Activated B cell treated with CpG ODN at 0.5 μM for 24 hours (primary cell): ENCODE measurements at regions of chr2 and their contacts with region 1.

Region 1: DNA sequence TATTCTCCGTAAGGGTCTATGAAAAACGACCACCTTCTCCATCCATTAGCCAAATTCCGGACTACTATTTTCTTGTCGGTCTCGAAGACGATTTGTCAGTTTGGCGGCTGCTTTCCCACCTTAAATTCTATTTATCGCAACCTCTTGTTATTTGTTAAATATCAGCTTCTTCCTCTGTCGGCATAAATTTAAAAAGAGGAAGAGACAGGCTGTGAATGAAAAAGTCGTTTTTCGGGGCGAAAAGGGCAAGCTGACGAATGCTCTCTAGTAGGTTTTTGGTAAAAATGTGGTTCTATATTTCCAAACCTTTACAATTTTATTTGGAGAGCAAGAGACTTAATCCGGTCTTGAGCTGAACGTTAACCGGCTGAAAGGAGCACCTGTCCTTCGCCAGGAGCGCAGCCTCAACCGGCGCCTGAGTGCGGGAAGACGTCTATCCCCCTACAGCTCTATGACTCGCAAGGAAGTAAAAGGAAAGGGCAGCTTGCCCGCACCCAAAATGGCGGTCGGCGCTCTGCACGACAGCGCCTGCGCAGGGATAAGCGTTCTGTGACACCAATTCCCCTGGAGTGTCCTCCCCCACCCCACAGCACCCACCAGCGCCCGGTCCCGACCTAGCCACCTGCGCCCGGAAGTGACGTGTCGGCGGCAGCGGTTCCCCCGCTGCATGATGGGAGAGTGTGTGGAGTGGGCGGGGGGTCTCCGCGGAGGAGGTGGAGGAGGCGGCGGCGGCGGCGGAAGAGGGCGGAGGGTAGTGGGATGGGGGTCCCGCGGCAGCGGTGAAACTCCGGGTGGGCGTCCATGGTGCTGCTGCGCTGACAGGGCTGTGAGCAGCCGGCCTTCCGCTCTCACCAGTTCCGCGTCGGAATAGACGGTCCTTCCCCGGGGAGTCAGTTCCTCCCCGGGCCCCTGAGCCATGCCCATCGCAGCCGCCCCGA is at the start of gene AFTPH:
- DNase-seq: peak; percentile 97
- ATAC-seq: peak; percentile 87
- H3K4me3 Mint-ChIP-seq: peak within 1 kb of the TSS; percentile 99
- H3K27ac Mint-ChIP-seq: peak within 1 kb of the TSS; percentile 100
- H3K4me1 Mint-ChIP-seq: peaks cover 46% of the 10 kb centered on the region
- H3K27me3 Mint-ChIP-seq: no peaks in the 10 kb centered on the region
- CTCF ChIP-seq: no peak
- total RNA-seq, gene AFTPH: 76.2 and 81.3 TPM in 2 replicates

Region 2: DNA sequence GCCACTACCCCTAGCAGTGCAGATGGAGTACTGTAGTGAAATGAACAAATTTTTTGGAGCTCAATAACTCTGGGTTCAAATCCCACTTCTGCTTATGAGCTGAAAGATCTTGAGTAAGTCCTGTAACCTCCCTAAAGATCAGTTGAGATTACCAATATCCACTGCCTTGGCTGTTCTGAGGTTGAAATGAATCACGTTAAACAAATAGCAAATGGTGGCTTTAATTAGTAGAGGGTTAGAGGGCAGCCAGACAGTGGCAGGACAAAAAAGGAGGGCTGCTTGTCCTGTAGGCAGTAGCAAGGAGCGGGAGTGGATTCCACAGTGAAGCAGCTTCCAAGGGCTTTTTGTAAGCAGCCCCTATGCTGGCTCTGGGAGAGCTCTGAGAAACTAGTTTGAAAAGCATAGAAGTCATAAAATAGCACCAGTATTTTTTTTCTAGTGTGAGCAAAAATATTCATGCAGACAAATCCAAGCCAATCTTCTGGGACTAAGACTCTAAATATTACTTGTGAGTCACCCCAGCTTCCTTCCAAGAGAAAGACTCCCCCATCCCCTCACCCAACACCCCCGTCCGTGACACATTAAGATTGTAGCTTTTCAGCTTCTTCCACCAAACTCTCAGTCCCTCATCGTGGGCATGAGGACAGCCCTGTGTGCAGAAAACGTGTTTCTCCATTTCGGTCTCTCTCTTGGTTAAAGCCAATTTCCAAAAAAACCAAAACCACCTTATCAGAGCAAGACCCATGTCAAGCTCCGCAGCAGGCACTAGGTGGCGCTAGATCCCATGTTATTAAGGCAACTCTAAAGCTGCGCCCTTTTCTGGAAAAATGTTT is 193.4 kb before region 1 on chr2:
- CTCF ChIA-PET with region 1: interaction called, 30 read pairs
- POLR2A ChIA-PET with region 1: interaction called, 9 read pairs
- intact Hi-C with region 1: no loop called
- DNase-seq: peak; percentile 41
- ATAC-seq: no peak
- H3K4me3 Mint-ChIP-seq: peak overlapping the region; percentile 55
- H3K27ac Mint-ChIP-seq: peak overlapping the region; percentile 10
- H3K4me1 Mint-ChIP-seq: peaks cover 47% of the 10 kb centered on the region
- H3K27me3 Mint-ChIP-seq: no peaks in the 10 kb centered on the region
- CTCF ChIP-seq: peak; percentile 45

Region 3: GRCh38 chr2:64609227-64609941 is 85.4 kb after region 1 on chr2:
- CTCF ChIA-PET with region 1: interaction called, 3 read pairs
- POLR2A ChIA-PET with region 1: interaction called, 5 read pairs
- intact Hi-C with region 1: loop called (anchors 1 kb)
- DNase-seq: peak; percentile 82
- ATAC-seq: peak; percentile 71
- H3K4me3 Mint-ChIP-seq: peak overlapping the region; percentile 84
- H3K27ac Mint-ChIP-seq: peak overlapping the region; percentile 77
- H3K4me1 Mint-ChIP-seq: peaks cover 34% of the 10 kb centered on the region
- H3K27me3 Mint-ChIP-seq: no peaks in the 10 kb centered on the region
- CTCF ChIP-seq: no peak

Region 4: DNA sequence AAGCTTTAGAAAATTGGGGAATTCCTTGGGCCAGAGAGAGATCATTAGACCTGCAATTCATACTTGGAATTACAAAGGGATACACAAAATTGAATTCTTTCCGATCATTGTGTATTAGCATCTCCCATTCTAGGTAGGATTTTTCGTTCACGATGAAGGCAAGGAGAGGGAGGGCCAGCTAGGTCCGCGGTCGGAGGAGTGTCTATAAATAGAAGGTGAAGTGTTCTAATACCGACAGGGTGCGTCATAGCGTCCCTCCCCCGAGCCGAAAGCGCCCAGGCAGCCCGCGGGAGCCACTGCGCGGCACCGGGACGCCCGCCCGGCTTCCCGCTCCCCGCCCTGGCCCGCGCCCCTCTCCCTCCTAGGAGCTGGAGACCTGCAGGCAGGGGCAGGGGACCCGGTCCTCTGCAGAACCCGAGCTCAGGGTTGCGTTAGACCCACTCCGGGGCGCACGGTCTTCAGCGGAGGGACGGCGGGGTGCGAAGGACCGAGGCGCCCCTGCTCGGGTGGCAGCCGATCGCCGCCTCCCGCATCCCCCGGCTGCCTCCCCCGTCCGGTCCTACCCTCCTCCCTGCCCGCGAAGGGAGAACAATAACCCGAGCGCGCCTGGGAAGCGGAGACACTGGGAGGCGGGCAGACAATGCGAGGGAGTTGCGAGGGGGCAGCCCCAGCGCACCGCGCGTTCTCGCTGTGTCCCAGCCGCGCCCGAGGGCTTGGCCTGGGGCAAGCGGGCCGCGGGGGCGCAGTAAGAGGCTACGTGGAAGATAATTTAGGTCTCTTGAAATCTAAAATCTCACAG is 243.9 kb after region 1 on chr2:
- CTCF ChIA-PET with region 1: no interaction called
- POLR2A ChIA-PET with region 1: interaction called, 14 read pairs
- intact Hi-C with region 1: loop called (anchors 5 kb)
- DNase-seq: peak; percentile 76
- ATAC-seq: peak; percentile 81
- H3K4me3 Mint-ChIP-seq: peak overlapping the region; percentile 88
- H3K27ac Mint-ChIP-seq: peak overlapping the region; percentile 96
- H3K4me1 Mint-ChIP-seq: peaks cover 21% of the 10 kb centered on the region
- H3K27me3 Mint-ChIP-seq: no peaks in the 10 kb centered on the region
- CTCF ChIP-seq: no peak

Region 5: GRCh38 chr2:64988420-64989125 is 464.6 kb after region 1 on chr2:
- CTCF ChIA-PET with region 1: no interaction called
- POLR2A ChIA-PET with region 1: interaction called, 11 read pairs
- intact Hi-C with region 1: loop called (anchors 2 kb)
- DNase-seq: peak; percentile 62
- ATAC-seq: peak; percentile 43
- H3K4me3 Mint-ChIP-seq: peak overlapping the region; percentile 85
- H3K27ac Mint-ChIP-seq: peak overlapping the region; percentile 87
- H3K4me1 Mint-ChIP-seq: peaks cover 40% of the 10 kb centered on the region
- H3K27me3 Mint-ChIP-seq: no peaks in the 10 kb centered on the region
- CTCF ChIP-seq: no peak

Region 6: GRCh38 chr2:65576861-65577601 is 1053.1 kb after region 1 on chr2:
- CTCF ChIA-PET with region 1: no interaction called
- POLR2A ChIA-PET with region 1: no interaction called
- intact Hi-C with region 1: loop called (anchors 2 kb)
- DNase-seq: no peak
- ATAC-seq: no peak
- H3K4me3 Mint-ChIP-seq: no peak overlapping the region
- H3K27ac Mint-ChIP-seq: no peak overlapping the region
- H3K4me1 Mint-ChIP-seq: peaks cover 6% of the 10 kb centered on the region
- H3K27me3 Mint-ChIP-seq: peaks cover 2% of the 10 kb centered on the region
- CTCF ChIP-seq: no peak